Breast epithelium (tissue), 4 donors: ENCODE measurements at regions of chr3 and their contacts with region 1.

Region 1: GRCh38 chr3:72405943-72406566 is 442.2 kb downstream of the SHQ1 start:
- DNase-seq: no peak
- H3K4me3 ChIP-seq: no peak overlapping the region
- H3K27ac ChIP-seq: no peak overlapping the region
- H3K4me1 ChIP-seq: peaks cover 0 to 16% of the 10 kb centered on the region in 2 donors
- H3K27me3 ChIP-seq: no peaks in the 10 kb centered on the region
- CTCF ChIP-seq: no peak
- POLR2A ChIP-seq: no peak

Region 2: DNA sequence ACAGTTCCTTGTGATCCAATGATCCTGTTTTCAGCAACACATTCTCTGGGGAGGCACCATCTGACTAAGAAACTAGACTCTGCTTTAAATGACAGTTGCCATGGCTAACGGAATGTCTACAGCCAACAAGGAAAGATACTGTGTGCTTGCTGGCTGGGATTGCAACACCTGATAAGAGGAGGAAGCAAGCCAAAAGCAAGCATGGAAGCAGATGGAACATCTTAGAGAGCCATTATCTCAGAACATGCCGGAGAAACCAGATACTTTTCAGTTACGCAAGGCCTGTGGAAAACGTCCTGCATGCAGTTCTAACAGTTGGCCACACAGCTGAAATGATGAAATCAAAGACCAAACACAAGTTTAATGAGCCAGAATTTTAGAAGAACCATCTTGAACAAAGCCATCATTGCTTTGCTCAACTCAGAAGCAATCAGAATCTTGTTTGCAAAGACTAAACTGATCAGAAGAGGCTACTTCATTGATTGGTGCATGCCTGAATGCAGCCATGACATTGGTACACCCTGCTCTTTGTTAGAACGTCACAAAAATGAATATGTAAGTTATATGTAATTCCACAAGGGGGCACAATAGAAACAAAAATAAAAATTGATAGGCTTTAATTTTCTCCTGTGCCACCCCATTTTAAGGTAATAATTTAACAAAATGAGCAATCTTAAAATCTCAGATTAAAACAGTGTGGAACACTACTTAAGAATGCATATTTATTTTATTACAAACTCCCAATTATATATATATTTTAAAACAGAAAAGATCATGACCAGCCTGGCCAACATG is 532.6 kb after region 1 on chr3:
- intact Hi-C with region 1: loop called (anchors 10 kb)
- DNase-seq: peak in 1 of 2 donors; percentile 36
- H3K4me3 ChIP-seq: no peak overlapping the region
- H3K27ac ChIP-seq: peak overlapping the region; percentile 40 to 60
- H3K4me1 ChIP-seq: no peaks in the 10 kb centered on the region
- H3K27me3 ChIP-seq: no peaks in the 10 kb centered on the region
- CTCF ChIP-seq: peak; percentile 66 to 86 (median 82)
- POLR2A ChIP-seq: no peak